Sciatic nerve (tissue), 2 donors: ENCODE measurements at regions of chr14 and their contacts with region 1.

Region 1: GRCh38 chr14:102608064-102608446 is 15.6 kb downstream of the RCOR1 start:
- DNase-seq: no peak
- ATAC-seq: no peak

Region 2: DNA sequence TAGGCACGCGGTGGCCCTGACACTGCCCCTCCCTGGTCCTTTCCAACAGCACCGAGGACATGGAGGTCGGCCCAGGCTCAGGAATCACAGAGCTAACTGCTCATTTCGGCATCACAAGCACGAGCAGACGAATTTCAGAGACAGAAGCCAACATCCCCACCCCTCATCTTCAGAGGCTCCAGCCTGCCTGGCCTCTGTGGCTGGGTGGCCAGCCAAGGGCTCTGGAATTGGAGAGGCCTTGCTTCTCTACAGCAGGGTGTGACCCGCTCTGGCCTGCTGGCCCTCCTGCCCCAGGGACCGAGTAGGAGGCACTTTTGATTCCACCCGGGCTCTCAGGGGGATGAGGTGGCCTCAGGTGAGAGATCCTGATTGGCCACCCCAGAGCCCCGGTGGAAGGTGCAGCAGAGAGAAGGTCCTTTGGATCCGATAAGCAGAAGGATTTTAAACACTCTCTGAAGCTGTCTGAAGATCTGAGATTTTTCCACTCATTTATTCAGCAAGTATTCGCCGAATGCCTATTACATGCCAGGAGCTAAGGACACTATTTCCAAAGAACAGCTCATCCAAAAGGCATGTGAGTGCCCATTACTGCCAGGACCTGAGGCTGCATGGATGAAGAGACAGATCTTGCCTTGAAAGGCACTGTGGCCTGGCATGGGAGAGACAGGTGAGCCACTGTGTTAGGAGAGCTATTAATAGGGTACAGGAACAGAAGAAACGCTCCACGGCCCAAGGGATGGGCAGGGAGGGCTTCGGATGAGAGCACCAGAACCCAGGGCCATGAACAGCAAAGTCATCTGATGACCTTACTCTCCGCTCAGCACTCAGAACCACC is 944.2 kb after region 1 on chr14:
- intact Hi-C with region 1: loop called (anchors 10 kb)
- DNase-seq: peak; percentile 70
- ATAC-seq: peak; percentile 77